WTC11 (cell line): ENCODE measurements at regions of chr20 and their contacts with region 1.

Region 1: GRCh38 chr20:40741507-40742106 is 52.6 kb upstream of the MAFB start:
- DNase-seq: peak; percentile 66
- ATAC-seq: peak; percentile 78
- H3K4me3 Mint-ChIP-seq: no peak overlapping the region
- H3K27ac Mint-ChIP-seq: no peak overlapping the region
- H3K4me1 Mint-ChIP-seq: peaks cover 31% of the 10 kb centered on the region
- H3K27me3 Mint-ChIP-seq: no peaks in the 10 kb centered on the region
- CTCF ChIP-seq: peak; percentile 46; the same call in 1 of the 2 replicates

Region 2: DNA sequence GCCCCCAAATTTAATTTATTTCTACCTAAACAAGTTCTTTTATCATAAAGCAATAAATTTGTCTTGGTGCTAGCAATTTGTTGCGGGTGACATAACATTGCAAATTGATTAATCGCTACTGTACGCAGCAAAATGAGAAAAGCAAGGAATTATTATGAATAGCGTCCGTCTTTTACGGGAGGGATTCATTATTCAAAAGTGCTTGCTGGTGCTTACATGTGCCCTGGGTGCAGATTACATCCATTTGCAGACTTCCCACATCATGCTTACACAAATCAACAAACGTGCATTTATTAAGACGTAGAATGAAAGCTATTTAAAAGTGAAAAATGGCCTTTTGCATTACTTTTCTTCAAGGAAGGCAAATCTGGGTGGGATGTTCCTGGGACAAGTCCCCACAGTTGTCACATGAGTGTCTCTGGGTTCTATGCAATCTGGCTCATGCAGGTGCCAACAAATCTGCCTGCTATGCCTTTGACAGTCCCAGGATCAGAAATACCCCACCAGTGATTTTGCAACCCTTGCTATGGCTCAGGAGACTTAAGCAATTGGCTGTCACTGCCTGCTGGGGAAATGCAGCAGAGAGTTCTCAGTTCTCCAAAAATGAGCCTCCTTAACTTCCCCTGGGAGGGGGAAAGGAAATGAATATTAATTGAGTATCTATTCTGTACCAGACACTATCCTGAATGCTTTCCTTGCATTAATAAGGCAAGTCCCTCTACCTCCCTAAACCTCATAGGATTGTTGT is 22.5 kb before region 1 on chr20:
- CTCF ChIA-PET with region 1: interaction called, 13 read pairs
- POLR2A ChIA-PET with region 1: no interaction called
- DNase-seq: no peak
- ATAC-seq: no peak
- H3K4me3 Mint-ChIP-seq: no peak overlapping the region
- H3K27ac Mint-ChIP-seq: no peak overlapping the region
- H3K4me1 Mint-ChIP-seq: peaks cover 6% of the 10 kb centered on the region; the same call in 1 of the 2 replicates
- H3K27me3 Mint-ChIP-seq: no peaks in the 10 kb centered on the region
- CTCF ChIP-seq: no peak

Region 3: GRCh38 chr20:40797425-40797824 is 55.8 kb after region 1 on chr20:
- CTCF ChIA-PET with region 1: interaction called, 21 read pairs
- POLR2A ChIA-PET with region 1: no interaction called
- DNase-seq: no peak
- ATAC-seq: peak; percentile 81
- H3K4me3 Mint-ChIP-seq: no peak overlapping the region
- H3K27ac Mint-ChIP-seq: no peak overlapping the region
- H3K4me1 Mint-ChIP-seq: no peaks in the 10 kb centered on the region
- H3K27me3 Mint-ChIP-seq: no peaks in the 10 kb centered on the region
- CTCF ChIP-seq: peak; percentile 30; the same call in 1 of the 2 replicates

Region 4: DNA sequence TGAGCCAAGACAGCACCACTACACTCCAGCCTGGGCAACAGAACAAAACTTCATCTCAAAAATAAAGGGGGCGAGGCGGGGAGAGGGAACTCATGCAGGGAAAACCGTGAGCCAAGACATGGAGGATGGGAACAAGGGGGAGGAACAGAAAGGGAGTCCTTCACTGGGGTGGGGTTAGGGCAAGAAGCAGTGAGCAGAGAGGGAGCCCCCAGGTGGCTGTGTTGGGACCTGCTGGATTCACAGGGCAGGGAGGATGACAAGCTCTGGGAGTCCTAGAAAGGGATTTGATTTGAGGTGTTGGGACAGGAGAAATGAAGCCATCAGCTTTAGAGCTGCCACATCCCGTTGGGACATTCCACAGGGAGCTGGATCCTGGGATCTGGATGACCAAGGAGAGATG is 196.4 kb after region 1 on chr20:
- CTCF ChIA-PET with region 1: interaction called, 16 read pairs
- POLR2A ChIA-PET with region 1: no interaction called
- DNase-seq: peak; percentile 56
- ATAC-seq: peak; percentile 94
- H3K4me3 Mint-ChIP-seq: no peak overlapping the region
- H3K27ac Mint-ChIP-seq: no peak overlapping the region
- H3K4me1 Mint-ChIP-seq: no peaks in the 10 kb centered on the region
- H3K27me3 Mint-ChIP-seq: peaks cover 3% of the 10 kb centered on the region; the same call in 1 of the 2 replicates
- CTCF ChIP-seq: no peak

Region 5: GRCh38 chr20:40945754-40946450 is 204.3 kb after region 1 on chr20:
- CTCF ChIA-PET with region 1: interaction called, 55 read pairs
- POLR2A ChIA-PET with region 1: no interaction called
- DNase-seq: peak; percentile 73
- ATAC-seq: peak; percentile 96
- H3K4me3 Mint-ChIP-seq: no peak overlapping the region
- H3K27ac Mint-ChIP-seq: no peak overlapping the region
- H3K4me1 Mint-ChIP-seq: peaks cover 26% of the 10 kb centered on the region
- H3K27me3 Mint-ChIP-seq: peaks cover 6% of the 10 kb centered on the region
- CTCF ChIP-seq: no peak

Region 6: DNA sequence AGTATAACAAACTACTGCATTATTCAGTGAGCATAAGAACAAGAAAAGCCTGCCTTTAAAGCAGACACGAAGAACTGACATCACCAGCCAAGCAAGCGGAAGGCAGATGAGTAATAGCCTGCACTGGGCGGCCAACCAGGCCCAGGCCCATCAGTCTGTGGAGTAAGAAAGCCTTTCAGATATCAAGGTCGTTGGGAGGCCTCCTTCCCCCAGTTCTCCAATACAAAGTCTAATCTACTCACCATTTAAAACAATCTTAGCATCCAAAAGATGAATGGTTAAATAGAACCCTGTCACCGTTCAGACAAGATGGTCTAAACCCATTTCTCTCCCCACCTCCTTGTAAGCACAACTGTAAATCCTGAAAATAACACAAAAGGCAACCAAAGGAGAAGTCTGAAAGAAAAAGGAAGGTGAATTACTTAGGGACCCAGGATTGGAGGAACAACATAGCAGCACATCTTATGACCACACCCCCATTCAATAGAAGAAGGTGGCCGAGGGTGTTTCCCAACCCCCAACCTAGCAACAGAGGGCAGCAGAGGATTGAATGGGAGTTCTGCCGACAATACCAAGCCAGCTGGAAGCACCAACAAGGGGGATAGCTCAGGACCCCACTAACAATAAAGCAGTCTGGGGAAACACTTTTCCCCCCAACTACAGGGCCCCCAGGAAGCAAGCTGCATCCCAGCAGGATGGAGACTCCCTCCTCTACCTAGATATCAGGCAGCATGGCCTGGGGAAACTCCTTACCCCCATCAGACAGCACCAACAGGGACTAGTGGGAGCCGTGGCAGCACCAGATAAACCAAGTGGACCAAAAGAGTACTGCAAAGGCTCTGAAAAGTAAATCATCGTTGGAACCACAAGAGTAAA is 508.0 kb after region 1 on chr20:
- CTCF ChIA-PET with region 1: no interaction called
- POLR2A ChIA-PET with region 1: no interaction called
- DNase-seq: peak; percentile 71
- ATAC-seq: peak; percentile 90
- H3K4me3 Mint-ChIP-seq: no peak overlapping the region; the same call in 1 of the 2 replicates
- H3K27ac Mint-ChIP-seq: peak overlapping the region; percentile 80; the same call in 1 of the 2 replicates
- H3K4me1 Mint-ChIP-seq: peaks cover 5% of the 10 kb centered on the region; the same call in 1 of the 2 replicates
- H3K27me3 Mint-ChIP-seq: peaks cover 37% of the 10 kb centered on the region
- CTCF ChIP-seq: peak; percentile 41; the same call in 1 of the 2 replicates

Region 7: GRCh38 chr20:41524980-41525613 is 783.5 kb after region 1 on chr20:
- CTCF ChIA-PET with region 1: no interaction called
- POLR2A ChIA-PET with region 1: no interaction called
- DNase-seq: no peak
- ATAC-seq: peak; percentile 44
- H3K4me3 Mint-ChIP-seq: no peak overlapping the region
- H3K27ac Mint-ChIP-seq: peak overlapping the region; percentile 55
- H3K4me1 Mint-ChIP-seq: peaks cover 12% of the 10 kb centered on the region; the same call in 1 of the 2 replicates
- H3K27me3 Mint-ChIP-seq: no peaks in the 10 kb centered on the region
- CTCF ChIP-seq: no peak